ENCODE measurements at regions of chr1 and their contacts with region 1.

Region 1: GRCh38 chr1:79353224-79353623 is 346.7 kb upstream of the ADGRL4 start:
- DNase-seq: peak in 1 of 10 donors; percentile 19

Region 2: GRCh38 chr1:78839704-78840277 is 513.4 kb before region 1 on chr1:
- intact Hi-C with region 1: loop called (anchors 5 kb)
- DNase-seq: peak in 2 of 10 donors; percentile 2 to 11